Activated CD4-positive, alpha-beta T cell treated with anti-CD3 and anti-CD28 coated beads for 36 hours (primary cell): ENCODE measurements at regions of chr7 and their contacts with region 1.

Region 1: GRCh38 chr7:20172736-20173334 is 44.3 kb downstream of the MACC1 start:
- DNase-seq: peak; percentile 52
- ATAC-seq: no peak
- H3K4me3 Mint-ChIP-seq: no peak overlapping the region
- H3K27ac Mint-ChIP-seq: no peak overlapping the region
- H3K4me1 Mint-ChIP-seq: no peaks in the 10 kb centered on the region
- H3K27me3 Mint-ChIP-seq: no peaks in the 10 kb centered on the region

Region 2: GRCh38 chr7:19713676-19714075 is 459.2 kb before region 1 on chr7:
- CTCF ChIA-PET with region 1: interaction called, 4 read pairs
- POLR2A ChIA-PET with region 1: no interaction called
- intact Hi-C with region 1: loop called in 1 of 2 experiments (anchors 5 kb)
- DNase-seq: peak; percentile 55
- ATAC-seq: no peak
- H3K4me3 Mint-ChIP-seq: no peak overlapping the region
- H3K27ac Mint-ChIP-seq: no peak overlapping the region
- H3K4me1 Mint-ChIP-seq: peaks cover 15% of the 10 kb centered on the region
- H3K27me3 Mint-ChIP-seq: no peaks in the 10 kb centered on the region

Region 3: GRCh38 chr7:19754521-19755116 is 418.2 kb before region 1 on chr7:
- CTCF ChIA-PET with region 1: interaction called, 4 read pairs
- POLR2A ChIA-PET with region 1: no interaction called
- intact Hi-C with region 1: loop called (anchors 1 to 5 kb)
- DNase-seq: no peak
- ATAC-seq: no peak
- H3K4me3 Mint-ChIP-seq: no peak overlapping the region
- H3K27ac Mint-ChIP-seq: no peak overlapping the region
- H3K4me1 Mint-ChIP-seq: no peaks in the 10 kb centered on the region
- H3K27me3 Mint-ChIP-seq: peaks cover 11% of the 10 kb centered on the region

Region 4: GRCh38 chr7:19982841-19983835 is 189.7 kb before region 1 on chr7:
- CTCF ChIA-PET with region 1: interaction called, 3 read pairs
- POLR2A ChIA-PET with region 1: no interaction called
- intact Hi-C with region 1: loop called (anchors 2 to 10 kb)
- DNase-seq: peak; percentile 29
- ATAC-seq: no peak
- H3K4me3 Mint-ChIP-seq: no peak overlapping the region
- H3K27ac Mint-ChIP-seq: no peak overlapping the region
- H3K4me1 Mint-ChIP-seq: no peaks in the 10 kb centered on the region
- H3K27me3 Mint-ChIP-seq: no peaks in the 10 kb centered on the region

Region 5: DNA sequence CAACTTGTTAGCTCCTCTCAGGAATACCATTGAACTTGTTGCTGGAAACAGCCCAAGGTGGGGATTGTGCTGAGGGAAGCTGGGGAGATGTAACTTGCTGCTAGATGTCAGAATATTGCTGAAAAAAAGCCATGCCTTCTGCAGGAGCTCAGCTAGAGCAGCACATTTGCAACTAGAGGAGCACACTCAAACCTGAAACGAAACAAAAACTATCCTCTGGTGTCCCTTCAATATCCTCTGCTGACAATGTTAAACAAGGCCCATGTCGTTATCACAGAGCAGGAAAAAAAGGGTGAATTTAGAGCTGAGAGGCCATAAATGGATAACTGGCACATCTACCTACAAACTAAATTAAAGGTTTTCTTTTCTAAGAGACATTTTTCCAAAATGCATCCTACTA is 98.0 kb after region 1 on chr7:
- CTCF ChIA-PET with region 1: no interaction called
- POLR2A ChIA-PET with region 1: no interaction called
- intact Hi-C with region 1: no loop called
- DNase-seq: no peak
- ATAC-seq: no peak
- H3K4me3 Mint-ChIP-seq: no peak overlapping the region
- H3K27ac Mint-ChIP-seq: no peak overlapping the region
- H3K4me1 Mint-ChIP-seq: no peaks in the 10 kb centered on the region
- H3K27me3 Mint-ChIP-seq: no peaks in the 10 kb centered on the region

Region 6: DNA sequence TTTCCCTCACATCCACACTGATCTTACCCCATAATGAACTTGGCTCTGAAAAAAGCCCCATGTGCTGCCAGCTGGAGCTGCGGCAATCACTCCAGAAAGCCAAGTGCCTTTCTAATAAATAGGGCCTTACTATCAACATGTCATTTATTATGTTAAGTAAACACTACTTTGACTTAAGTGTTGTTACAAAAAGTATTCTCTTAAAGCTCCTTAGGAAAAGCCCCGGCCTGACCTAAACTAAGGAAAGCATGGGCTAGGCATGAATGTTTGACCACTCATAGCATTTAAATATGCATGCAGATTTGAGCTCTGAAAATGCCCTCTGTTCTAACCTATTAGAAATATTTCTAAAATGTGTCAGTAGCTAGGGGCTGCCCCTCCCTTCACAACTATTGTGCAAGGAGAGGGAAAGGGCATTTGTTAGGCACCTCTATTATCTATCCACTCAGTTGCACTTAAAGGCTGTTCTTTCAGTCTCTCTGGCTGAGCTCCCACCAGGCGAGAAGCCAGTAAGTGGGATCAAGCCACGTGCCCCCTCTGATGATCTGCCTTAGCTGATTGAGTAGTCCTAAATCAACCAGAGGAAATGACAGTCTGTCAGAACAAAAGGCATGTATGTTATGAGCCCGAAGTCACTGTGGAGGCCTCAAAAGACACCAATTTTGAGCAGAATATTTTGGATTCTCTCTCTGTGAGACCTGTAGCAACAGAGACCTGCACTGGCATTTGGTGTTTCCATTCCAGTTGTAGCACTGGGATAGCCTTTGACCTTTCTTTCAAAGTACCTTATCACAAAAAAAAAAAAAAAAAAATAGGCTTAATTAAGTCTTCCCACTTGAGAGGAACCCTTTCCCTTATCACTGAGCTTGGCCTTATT is 235.0 kb after region 1 on chr7:
- CTCF ChIA-PET with region 1: no interaction called
- POLR2A ChIA-PET with region 1: no interaction called
- intact Hi-C with region 1: no loop called
- DNase-seq: no peak
- ATAC-seq: no peak
- H3K4me3 Mint-ChIP-seq: no peak overlapping the region
- H3K27ac Mint-ChIP-seq: no peak overlapping the region
- H3K4me1 Mint-ChIP-seq: no peaks in the 10 kb centered on the region
- H3K27me3 Mint-ChIP-seq: no peaks in the 10 kb centered on the region